ENCODE measurements at regions of chr12 and their contacts with region 1.

Region 1: DNA sequence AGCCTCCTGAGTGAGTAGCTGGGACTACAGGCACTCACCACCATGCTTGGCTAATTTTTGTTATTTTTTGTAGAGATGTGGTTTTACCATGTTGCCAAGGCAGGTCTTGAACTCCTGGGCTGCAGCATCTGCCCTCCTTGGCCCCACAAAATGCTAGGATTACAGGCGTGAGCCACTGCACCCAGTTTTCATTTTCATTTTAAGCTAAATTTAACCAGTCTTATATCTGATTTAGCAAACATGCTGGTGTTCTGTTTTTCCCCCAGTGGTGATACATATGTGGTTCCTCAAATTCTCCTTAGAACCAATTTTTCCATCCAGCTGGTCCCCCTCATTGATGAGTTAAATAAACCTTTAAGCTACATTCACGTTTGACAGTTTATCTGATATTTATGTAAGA is 43.8 kb upstream of the BICD1 start:
- H3K4me3 ChIP-seq: no peak overlapping the region
- H3K27ac ChIP-seq: no peak overlapping the region
- H3K4me1 ChIP-seq: no peaks in the 10 kb centered on the region
- CTCF ChIP-seq: no peak

Region 2: GRCh38 chr12:32039347-32039746 is 23.5 kb before region 1 on chr12:
- CTCF ChIA-PET with region 1: no interaction called
- POLR2A ChIA-PET with region 1: no interaction called
- H3K4me3 ChIP-seq: no peak overlapping the region
- H3K27ac ChIP-seq: no peak overlapping the region
- H3K4me1 ChIP-seq: no peaks in the 10 kb centered on the region
- CTCF ChIP-seq: no peak

Region 3: DNA sequence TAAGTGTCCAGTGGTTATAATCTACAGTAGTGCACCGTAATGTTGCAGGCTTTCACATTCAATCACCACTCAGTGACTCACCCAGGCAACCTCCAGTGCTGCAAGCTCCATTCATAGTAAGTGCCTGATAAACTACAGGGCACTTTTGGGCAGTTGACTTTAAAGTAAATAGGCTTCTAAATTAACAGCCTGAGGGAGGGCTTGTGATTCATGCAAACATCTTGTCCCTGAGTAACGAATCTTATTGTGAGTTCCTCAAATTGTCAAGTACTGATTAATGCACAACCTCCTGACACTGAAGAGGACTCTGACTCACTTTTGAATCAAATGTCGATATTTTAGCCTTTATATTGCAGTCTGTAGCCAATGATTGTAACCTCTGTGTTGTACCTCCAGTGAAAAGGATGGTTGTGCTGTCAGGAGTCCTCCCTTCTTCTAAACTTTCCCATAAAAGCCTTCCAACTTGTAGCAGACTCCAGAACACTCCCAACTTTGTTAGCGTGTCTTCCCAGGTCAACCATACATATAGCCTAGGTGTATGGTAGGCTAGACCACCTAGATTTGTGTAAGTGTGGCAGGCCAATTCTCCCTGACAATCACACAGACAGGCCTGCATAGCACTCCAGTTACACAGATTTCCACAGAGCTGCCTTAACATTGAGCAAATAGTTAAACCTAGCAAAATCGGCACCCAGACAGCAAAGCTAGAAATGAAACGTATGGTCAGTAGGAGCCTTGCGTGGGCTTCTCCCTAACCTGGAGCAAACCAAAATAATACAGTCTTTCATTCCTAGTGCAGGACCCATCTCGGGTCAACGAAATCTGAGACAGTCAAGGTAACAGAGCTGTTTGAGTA is 11.1 kb before region 1 on chr12:
- CTCF ChIA-PET with region 1: interaction called, 22 read pairs
- POLR2A ChIA-PET with region 1: no interaction called
- H3K4me3 ChIP-seq: no peak overlapping the region
- H3K27ac ChIP-seq: no peak overlapping the region
- H3K4me1 ChIP-seq: peaks cover 3% of the 10 kb centered on the region; the same call in 1 of the 2 replicates
- CTCF ChIP-seq: no peak

Region 4: GRCh38 chr12:32312049-32312670 is 249.3 kb after region 1 on chr12:
- CTCF ChIA-PET with region 1: interaction called, 10 read pairs
- POLR2A ChIA-PET with region 1: no interaction called
- H3K4me3 ChIP-seq: no peak overlapping the region
- H3K27ac ChIP-seq: no peak overlapping the region
- H3K4me1 ChIP-seq: peaks cover 19% of the 10 kb centered on the region; the same call in 1 of the 2 replicates
- CTCF ChIP-seq: peak; percentile 50; the same call in 1 of the 2 replicates